ENCODE measurements at regions of chr6 and their contacts with region 1.

Region 1: DNA sequence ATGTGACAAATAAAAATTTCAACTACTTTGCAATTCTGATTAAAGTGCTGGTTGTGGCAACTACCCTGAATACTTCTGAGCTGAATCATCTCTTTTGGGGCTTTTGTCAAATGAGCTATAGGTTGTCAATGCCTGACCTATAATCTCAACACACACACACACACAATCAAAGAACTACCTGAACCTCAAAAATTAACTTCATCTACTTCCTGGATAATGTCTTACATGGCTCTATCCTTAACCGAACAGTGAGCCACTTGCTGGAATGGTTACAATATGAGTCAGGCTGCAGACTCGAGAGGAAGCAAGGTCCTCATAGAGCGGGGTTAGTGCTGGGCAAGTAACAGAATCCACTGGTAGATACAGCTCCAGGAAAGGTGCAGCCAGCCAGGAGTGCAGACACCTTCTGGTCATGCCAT is 70.6 kb upstream of the DST start:
- DNase-seq: no peak
- H3K4me3 ChIP-seq: no peak overlapping the region
- H3K27ac ChIP-seq: no peak overlapping the region
- H3K4me1 ChIP-seq: no peaks in the 10 kb centered on the region
- H3K27me3 ChIP-seq: no peaks in the 10 kb centered on the region
- CTCF ChIP-seq: no peak
- POLR2A ChIP-seq: no peak

Region 2: GRCh38 chr6:56699066-56699654 is 14.1 kb before region 1 on chr6:
- intact Hi-C with region 1: no loop called
- DNase-seq: no peak
- H3K4me3 ChIP-seq: no peak overlapping the region
- H3K27ac ChIP-seq: no peak overlapping the region
- H3K4me1 ChIP-seq: no peaks in the 10 kb centered on the region
- H3K27me3 ChIP-seq: no peaks in the 10 kb centered on the region
- CTCF ChIP-seq: peak; percentile 19 to 71 (median 50)
- POLR2A ChIP-seq: no peak

Region 3: GRCh38 chr6:56843573-56844349 is 130.5 kb after region 1 on chr6:
- intact Hi-C with region 1: loop called (anchors 5 kb)
- DNase-seq: no peak
- H3K4me3 ChIP-seq: peak overlapping the region; percentile 71 to 91 (median 82)
- H3K27ac ChIP-seq: peak overlapping the region; percentile 74 to 86
- H3K4me1 ChIP-seq: no peaks in the 10 kb centered on the region
- H3K27me3 ChIP-seq: peaks cover 0 to 4% of the 10 kb centered on the region in 2 donors
- CTCF ChIP-seq: peak in 2 of 3 donors; percentile 8 to 15
- POLR2A ChIP-seq: no peak

Measured in breast epithelium (tissue), 4 donors.